Naive thymus-derived CD4-positive, alpha-beta T cell (primary cell): ENCODE measurements at regions of chr5 and their contacts with region 1.

Region 1: GRCh38 chr5:40679155-40679913 is 381 bp upstream of the PTGER4 start:
- DNase-seq: peak; percentile 82 to 96 (median 87)
- ATAC-seq: peak; percentile 83
- H3K4me3 ChIP-seq: peak overlapping the region; percentile 77
- H3K4me3 Mint-ChIP-seq: peak overlapping the region; percentile 93 to 100 (median 98)
- H3K27ac ChIP-seq: peak overlapping the region; percentile 99
- H3K27ac Mint-ChIP-seq: peak overlapping the region; percentile 87 to 98 (median 96)
- H3K4me1 ChIP-seq: peaks cover 27 to 38% of the 10 kb centered on the region in 2 donors
- H3K4me1 Mint-ChIP-seq: peaks cover 34 to 63% (median 55%) of the 10 kb centered on the region in 7 donors
- H3K27me3 ChIP-seq: no peaks in the 10 kb centered on the region
- H3K27me3 Mint-ChIP-seq: no peaks in the 10 kb centered on the region

Region 2: GRCh38 chr5:40223884-40224402 is 455.4 kb before region 1 on chr5:
- CTCF ChIA-PET with region 1: no interaction called
- POLR2A ChIA-PET with region 1: no interaction called
- intact Hi-C with region 1: loop called in 1 of 2 experiments (anchors 2 kb)
- DNase-seq: peak in 1 of 9 donors; percentile 34
- ATAC-seq: peak; percentile 40
- H3K4me3 ChIP-seq: no peak overlapping the region
- H3K4me3 Mint-ChIP-seq: peak overlapping the region in 1 of 10 donors; percentile 70
- H3K27ac ChIP-seq: no peak overlapping the region
- H3K27ac Mint-ChIP-seq: peak overlapping the region in 1 of 9 donors; percentile 79
- H3K4me1 ChIP-seq: peaks cover 0 to 4% of the 10 kb centered on the region in 2 donors
- H3K4me1 Mint-ChIP-seq: peaks cover 0 to 36% (median 6%) of the 10 kb centered on the region in 7 donors
- H3K27me3 ChIP-seq: no peaks in the 10 kb centered on the region
- H3K27me3 Mint-ChIP-seq: peaks cover 0 to 5% (median 0%) of the 10 kb centered on the region in 5 donors

Region 3: DNA sequence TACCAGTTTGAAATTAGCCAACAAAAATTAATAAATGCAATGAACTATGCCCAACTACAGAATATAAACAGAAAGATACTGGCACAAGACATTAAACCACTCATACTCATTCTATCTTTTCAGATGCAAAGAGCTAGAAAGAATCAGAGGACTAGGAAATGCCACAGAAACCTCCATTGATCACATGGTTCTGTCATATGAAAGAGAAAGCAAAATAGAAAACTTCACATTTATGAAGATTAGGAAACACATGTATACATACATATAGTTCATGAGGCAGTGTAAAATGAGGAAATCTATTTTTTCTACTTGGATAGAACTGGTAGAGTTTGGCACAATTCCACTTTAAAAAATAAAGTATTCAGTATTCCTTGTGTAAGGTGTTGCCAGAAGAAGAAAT is 274.7 kb before region 1 on chr5:
- CTCF ChIA-PET with region 1: interaction called, 7 read pairs
- POLR2A ChIA-PET with region 1: interaction called, 37 read pairs
- intact Hi-C with region 1: loop called in 1 of 2 experiments (anchors 1 kb)
- DNase-seq: peak in 7 of 9 donors; percentile 36 to 66 (median 60)
- ATAC-seq: peak; percentile 73
- H3K4me3 ChIP-seq: no peak overlapping the region
- H3K4me3 Mint-ChIP-seq: peak overlapping the region in 9 of 10 donors; percentile 34 to 83 (median 62)
- H3K27ac ChIP-seq: peak overlapping the region; percentile 99
- H3K27ac Mint-ChIP-seq: peak overlapping the region; percentile 95 to 100 (median 99)
- H3K4me1 ChIP-seq: peaks cover 48 to 50% of the 10 kb centered on the region in 2 donors
- H3K4me1 Mint-ChIP-seq: peaks cover 43 to 83% (median 80%) of the 10 kb centered on the region in 7 donors
- H3K27me3 ChIP-seq: no peaks in the 10 kb centered on the region
- H3K27me3 Mint-ChIP-seq: no peaks in the 10 kb centered on the region

Region 4: GRCh38 chr5:40502736-40503135 is 176.6 kb before region 1 on chr5:
- CTCF ChIA-PET with region 1: interaction called, 3 read pairs
- POLR2A ChIA-PET with region 1: interaction called, 3 read pairs
- intact Hi-C with region 1: loop called in 1 of 2 experiments (anchors 1 kb)
- DNase-seq: no peak
- ATAC-seq: no peak
- H3K4me3 ChIP-seq: no peak overlapping the region
- H3K4me3 Mint-ChIP-seq: no peak overlapping the region
- H3K27ac ChIP-seq: no peak overlapping the region
- H3K27ac Mint-ChIP-seq: no peak overlapping the region
- H3K4me1 ChIP-seq: no peaks in the 10 kb centered on the region
- H3K4me1 Mint-ChIP-seq: peaks cover 5 to 14% (median 6%) of the 10 kb centered on the region in 7 donors
- H3K27me3 ChIP-seq: no peaks in the 10 kb centered on the region
- H3K27me3 Mint-ChIP-seq: no peaks in the 10 kb centered on the region

Region 5: DNA sequence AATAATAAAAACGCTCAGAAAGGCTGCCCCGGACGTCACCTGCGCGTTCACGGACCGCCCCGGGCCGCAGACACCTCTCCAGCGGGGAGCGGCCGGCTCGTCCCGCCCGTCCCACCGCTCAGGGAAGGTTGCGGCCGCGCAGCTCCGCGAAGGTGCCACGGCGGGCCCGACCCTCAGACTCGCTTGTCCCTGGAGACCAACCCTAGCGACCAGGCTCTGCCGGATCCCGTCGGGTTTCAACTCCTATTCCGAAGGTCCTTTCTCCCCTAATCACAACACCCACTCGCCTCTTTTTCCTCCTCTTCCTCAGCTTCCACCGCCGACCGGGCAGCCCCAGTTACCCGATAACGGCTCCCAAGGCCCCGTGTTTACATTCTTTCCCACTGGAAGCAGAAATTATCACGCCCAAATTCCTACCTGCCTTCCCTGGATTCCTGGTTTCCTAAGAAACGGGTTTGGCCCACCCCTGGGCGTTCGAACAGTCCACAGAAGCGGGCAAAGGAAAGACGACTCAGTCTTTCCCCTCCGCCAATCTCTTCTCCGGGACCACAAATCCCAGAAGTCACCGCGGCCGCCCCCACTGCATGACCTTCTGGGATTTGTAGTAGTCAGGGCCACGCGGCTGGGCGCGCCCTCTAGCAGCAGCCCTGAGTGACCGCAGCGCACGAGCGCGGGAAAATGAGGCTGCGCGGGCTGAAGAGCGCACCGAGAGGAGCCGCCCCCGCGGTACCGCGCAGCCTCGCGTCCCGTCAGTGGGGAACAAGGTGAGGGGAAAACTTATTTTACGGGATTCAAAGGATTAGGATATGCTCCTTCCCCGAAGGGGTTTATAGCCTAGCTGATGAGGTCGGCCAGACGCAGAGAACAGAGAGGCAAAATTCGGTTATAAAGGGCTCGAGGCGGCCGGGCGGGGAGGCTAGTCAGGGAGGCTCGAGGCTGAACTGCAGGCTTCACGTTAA is 76.4 kb after region 1 on chr5 and contains the start of gene TTC33:
- CTCF ChIA-PET with region 1: no interaction called
- POLR2A ChIA-PET with region 1: interaction called, 3 read pairs
- intact Hi-C with region 1: loop called (anchors 1 kb)
- DNase-seq: peak; percentile 84 to 95 (median 91)
- ATAC-seq: peak; percentile 95
- H3K4me3 ChIP-seq: peak within 1 kb of the TSS; percentile 95
- H3K4me3 Mint-ChIP-seq: no peak within 1 kb of the TSS
- H3K27ac ChIP-seq: peak within 1 kb of the TSS; percentile 89
- H3K27ac Mint-ChIP-seq: peak within 1 kb of the TSS in 1 of 9 donors; percentile 32
- H3K4me1 ChIP-seq: peaks cover 9 to 11% of the 10 kb centered on the region in 2 donors
- H3K4me1 Mint-ChIP-seq: peaks cover 0 to 34% (median 17%) of the 10 kb centered on the region in 7 donors
- H3K27me3 ChIP-seq: no peaks in the 10 kb centered on the region
- H3K27me3 Mint-ChIP-seq: no peaks in the 10 kb centered on the region
- total RNA-seq, gene TTC33: 7.0 to 17.2 (median 14.0) TPM

Region 6: GRCh38 chr5:40791715-40792139 is 112.4 kb after region 1 on chr5:
- CTCF ChIA-PET with region 1: no interaction called
- POLR2A ChIA-PET with region 1: no interaction called
- intact Hi-C with region 1: no loop called
- DNase-seq: no peak
- ATAC-seq: no peak
- H3K4me3 ChIP-seq: no peak overlapping the region
- H3K4me3 Mint-ChIP-seq: no peak overlapping the region
- H3K27ac ChIP-seq: no peak overlapping the region
- H3K27ac Mint-ChIP-seq: no peak overlapping the region
- H3K4me1 ChIP-seq: peaks cover 0 to 25% of the 10 kb centered on the region in 2 donors
- H3K4me1 Mint-ChIP-seq: peaks cover 41 to 94% (median 87%) of the 10 kb centered on the region in 7 donors
- H3K27me3 ChIP-seq: no peaks in the 10 kb centered on the region
- H3K27me3 Mint-ChIP-seq: no peaks in the 10 kb centered on the region